ENCODE measurements at regions of chr22 and their contacts with region 1.

Region 1: DNA sequence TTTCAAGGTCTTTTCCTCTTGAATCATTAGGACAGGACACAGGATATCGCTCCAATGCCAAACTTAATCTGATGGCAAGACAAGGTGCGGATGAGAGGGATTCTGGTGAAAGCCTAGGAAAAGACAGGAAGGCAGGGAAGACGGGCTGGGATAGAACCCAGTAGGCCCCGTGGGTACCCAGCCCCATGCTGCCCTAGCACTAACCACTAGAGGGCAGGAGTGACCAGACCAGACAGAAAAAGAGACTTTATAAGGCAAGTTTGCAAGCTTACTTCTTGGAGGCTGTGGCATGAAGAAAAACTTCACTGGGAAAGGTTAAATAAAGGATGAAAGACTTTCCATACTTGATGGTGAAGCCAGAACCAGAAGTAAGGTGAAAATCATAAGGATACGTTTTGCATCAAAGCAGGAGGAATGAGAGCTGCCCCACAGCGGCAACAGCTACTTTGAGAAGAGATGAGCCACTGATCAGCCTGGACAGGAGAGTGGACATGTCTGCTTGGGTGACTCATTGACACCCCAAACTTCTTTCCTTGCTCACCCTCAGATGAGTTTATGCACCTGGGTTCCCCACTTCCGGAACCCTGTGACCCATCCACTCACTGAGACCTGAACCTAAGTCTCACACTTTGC is 39.8 kb downstream of the SYN3 start:
- DNase-seq: peak; percentile 64
- CTCF ChIP-seq: peak; percentile 87

Region 2: GRCh38 chr22:32880893-32881596 is 137.3 kb before region 1 on chr22:
- CTCF ChIA-PET with region 1: no interaction called
- POLR2A ChIA-PET with region 1: no interaction called
- DNase-seq: no peak
- CTCF ChIP-seq: no peak

Region 3: DNA sequence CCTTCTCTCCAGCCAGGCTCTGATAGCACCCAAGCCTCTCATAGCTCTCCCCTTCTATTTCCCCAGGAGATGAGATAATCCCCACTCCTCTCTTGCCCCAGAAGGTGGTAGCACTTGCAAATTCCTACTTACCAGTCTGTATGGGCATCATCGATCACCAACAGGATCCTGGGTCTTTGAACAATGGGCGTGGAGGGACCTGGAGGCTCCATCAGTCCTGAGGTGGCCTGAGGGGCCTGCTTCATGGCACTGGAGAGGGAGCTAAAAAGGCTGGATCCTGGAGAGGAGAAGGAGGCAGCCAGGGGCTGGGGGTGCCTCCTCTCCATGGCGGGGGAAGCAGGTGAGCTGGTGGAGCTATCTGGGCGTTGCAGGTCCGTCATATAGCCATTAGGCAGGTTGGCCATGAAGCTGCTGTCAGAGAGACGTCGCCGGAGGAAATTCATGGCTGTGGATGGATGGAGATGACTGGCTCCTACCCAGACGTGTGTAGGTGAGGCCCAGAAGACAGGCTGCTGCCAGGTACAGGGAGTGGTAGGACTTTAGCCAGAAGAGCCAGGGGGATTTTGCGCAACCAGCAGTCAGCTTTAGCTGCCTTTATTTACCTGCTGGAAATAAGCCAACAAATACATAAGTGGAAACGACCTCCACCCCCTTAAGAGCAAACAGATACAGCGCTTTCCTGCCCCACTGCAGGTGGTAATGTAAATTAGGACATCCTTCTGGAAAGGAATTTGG is 12.0 kb before region 1 on chr22:
- CTCF ChIA-PET with region 1: interaction called, 12 read pairs
- POLR2A ChIA-PET with region 1: no interaction called
- DNase-seq: no peak
- CTCF ChIP-seq: no peak

Region 4: DNA sequence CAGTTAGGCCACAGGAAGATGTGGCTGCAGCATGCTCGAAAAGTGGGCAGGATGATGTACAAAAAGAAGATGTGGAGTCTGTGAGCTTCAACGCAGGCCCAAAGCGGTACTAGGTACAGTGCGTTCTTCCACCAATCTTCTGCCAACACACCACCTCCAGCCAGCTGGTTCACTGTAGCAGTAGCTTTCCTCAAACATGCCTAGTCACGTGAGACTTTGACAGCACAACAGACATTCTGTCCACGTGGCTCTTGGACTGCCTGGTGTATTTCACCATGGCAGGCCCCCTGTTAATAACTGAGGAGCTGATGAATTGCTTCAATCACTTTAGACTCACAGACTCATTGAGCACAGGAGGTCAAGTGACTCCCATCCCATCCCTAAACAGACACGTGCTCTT is 25.8 kb after region 1 on chr22:
- CTCF ChIA-PET with region 1: interaction called, 37 read pairs
- POLR2A ChIA-PET with region 1: no interaction called
- DNase-seq: no peak
- CTCF ChIP-seq: no peak

Region 5: GRCh38 chr22:33116872-33117547 is 98.7 kb after region 1 on chr22:
- CTCF ChIA-PET with region 1: no interaction called
- POLR2A ChIA-PET with region 1: no interaction called
- DNase-seq: no peak
- CTCF ChIP-seq: no peak

Region 6: GRCh38 chr22:33202455-33202854 is 184.1 kb after region 1 on chr22:
- CTCF ChIA-PET with region 1: interaction called, 34 read pairs
- POLR2A ChIA-PET with region 1: no interaction called
- DNase-seq: no peak
- CTCF ChIP-seq: no peak

Region 7: DNA sequence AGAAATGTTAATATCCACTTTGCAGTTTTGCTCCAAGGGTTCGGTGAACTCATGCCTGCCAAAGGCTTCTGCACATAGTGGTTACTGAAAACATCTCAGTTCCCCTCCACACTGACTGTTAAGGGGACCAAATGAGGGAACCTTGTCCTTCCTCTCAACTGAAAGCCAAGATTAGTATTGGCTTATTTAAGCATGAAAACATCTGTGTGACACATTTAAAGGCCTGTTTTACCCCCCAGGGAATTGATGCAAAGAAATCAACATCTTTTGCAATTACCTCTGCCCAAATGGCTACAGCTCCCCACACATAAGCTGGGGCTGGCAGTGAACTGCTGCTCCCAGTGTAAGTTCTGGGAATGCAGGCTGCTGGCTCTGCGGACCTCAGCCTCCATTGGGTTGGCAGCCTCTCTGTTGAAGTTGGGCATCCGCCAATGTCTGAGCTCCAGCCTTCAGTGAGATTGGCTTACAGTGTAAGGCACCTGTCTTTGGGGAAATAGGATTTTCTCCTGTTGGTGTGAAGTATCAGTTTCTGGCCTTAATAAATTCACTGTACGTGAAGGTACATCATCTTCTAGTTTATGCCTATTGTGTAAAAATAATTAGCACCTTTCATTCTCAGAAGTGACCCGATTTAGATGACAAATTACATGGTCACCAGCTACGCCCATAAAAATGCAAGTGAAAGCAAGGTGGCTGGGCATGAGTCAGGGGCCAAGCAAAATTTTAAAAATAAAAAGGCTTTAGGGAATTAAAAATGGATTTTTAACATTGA is 253.2 kb after region 1 on chr22:
- CTCF ChIA-PET with region 1: interaction called, 19 read pairs
- POLR2A ChIA-PET with region 1: no interaction called
- DNase-seq: peak; percentile 57
- CTCF ChIP-seq: no peak

Measured in GM10248 (cell line).